Mammary epithelial cell (primary cell): ENCODE measurements at regions of chr14 and their contacts with region 1.

Region 1: DNA sequence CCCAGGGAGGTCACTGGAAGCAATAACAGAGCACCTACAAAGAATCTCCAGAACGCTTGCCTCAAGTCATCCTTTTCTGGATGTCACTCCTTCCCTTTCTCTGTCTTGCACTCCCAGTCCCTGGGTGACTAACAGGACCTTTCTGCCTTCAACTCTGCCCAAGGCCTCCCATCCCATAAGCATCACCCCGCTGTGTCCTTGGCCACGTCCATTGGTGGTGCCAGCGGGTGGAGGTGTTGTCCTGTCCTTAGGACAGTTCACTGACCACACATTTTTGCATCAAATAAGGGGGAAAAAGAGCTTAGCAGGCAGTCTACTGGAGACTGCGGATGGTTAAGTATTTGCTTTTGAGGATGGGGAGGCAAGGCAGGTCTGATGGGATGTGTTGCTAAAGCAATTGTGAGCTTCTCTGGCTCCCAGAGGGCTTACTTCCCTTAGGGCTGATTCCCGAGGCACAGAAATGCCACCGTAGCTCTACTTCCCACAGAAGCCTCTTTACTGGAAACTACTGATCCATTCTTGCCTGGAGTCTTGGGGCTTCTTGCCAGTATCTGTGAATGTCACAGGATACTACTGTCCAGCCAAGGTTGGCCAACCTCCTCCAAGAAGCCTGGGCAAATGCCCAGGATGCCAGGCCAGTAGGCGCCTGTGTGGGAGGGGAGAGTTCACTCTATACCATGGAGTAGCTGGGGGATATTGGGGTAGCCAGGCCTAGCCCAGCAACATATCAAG is 23.8 kb upstream of the PLEK2 start:
- DNase-seq: no peak
- H3K4me3 ChIP-seq: no peak overlapping the region
- H3K27ac ChIP-seq: no peak overlapping the region
- H3K4me1 ChIP-seq: peaks cover 4% of the 10 kb centered on the region
- H3K27me3 ChIP-seq: no peaks in the 10 kb centered on the region
- CTCF ChIP-seq: no peak

Region 2: DNA sequence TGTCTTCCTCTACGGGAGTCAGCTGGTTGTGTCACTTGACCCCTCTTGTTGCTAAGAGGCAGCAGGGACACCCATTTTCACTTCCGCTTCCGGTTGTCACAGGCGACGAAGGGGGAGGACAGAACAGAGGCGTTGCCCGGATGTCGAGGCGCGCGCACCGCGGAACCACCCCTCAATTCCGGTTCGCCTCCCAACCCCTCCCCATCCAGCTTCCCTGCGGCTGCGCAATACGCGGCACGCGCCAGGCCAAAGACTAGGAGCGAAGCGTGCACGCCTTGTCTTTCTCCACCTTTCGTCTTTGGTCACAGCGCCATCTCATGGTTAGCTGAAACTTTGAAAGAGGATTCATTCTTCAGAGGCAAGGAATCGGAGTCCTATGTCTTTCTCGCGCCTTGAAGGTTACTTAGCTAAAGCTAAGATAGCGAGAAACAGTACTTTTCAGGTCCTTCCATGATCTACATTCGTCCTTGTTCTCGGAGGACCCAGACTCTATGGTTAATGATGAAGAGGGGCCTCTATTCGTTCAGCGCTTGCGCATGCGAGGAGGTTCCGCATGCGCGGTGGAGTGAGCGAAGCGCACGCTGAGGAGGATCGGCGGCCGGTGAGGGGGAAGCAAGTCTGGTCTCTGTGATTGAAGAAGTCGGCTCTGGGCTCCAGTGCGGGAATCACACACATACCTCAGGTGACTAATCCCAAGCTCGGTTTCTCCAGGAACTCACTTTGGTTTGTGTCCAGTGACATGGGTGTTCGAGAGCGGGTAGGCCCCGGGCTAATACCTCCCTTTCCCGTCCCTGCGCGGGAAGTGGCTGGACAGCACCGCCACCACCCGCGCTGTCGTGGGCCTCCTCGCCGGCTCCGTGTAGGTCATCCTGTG is 75.8 kb before region 1 on chr14 and contains the starts of genes ATP6V1D and EIF2S1:
- CTCF ChIA-PET with region 1: no interaction called
- dilution Hi-C with region 1: no loop called
- in situ Hi-C with region 1: no loop called
- intact Hi-C with region 1: no loop called
- DNase-seq: peak; percentile 99
- H3K4me3 ChIP-seq: peak within 1 kb of the TSS; percentile 82 to 90 (median 88)
- H3K27ac ChIP-seq: peak within 1 kb of the TSS; percentile 97
- H3K4me1 ChIP-seq: peaks cover 27% of the 10 kb centered on the region
- H3K27me3 ChIP-seq: no peaks in the 10 kb centered on the region
- CTCF ChIP-seq: peak; percentile 97 to 99
- total RNA-seq, gene ATP6V1D: 87.1 to 124 TPM
- total RNA-seq, gene EIF2S1: 120 to 198 TPM

Region 3: GRCh38 chr14:67508956-67509355 is 73.2 kb after region 1 on chr14:
- CTCF ChIA-PET with region 1: no interaction called
- dilution Hi-C with region 1: loop called (anchors 5 kb)
- in situ Hi-C with region 1: no loop called
- intact Hi-C with region 1: no loop called
- DNase-seq: no peak
- H3K4me3 ChIP-seq: no peak overlapping the region
- H3K27ac ChIP-seq: no peak overlapping the region
- H3K4me1 ChIP-seq: peaks cover 15% of the 10 kb centered on the region
- H3K27me3 ChIP-seq: no peaks in the 10 kb centered on the region
- CTCF ChIP-seq: no peak

Region 4: DNA sequence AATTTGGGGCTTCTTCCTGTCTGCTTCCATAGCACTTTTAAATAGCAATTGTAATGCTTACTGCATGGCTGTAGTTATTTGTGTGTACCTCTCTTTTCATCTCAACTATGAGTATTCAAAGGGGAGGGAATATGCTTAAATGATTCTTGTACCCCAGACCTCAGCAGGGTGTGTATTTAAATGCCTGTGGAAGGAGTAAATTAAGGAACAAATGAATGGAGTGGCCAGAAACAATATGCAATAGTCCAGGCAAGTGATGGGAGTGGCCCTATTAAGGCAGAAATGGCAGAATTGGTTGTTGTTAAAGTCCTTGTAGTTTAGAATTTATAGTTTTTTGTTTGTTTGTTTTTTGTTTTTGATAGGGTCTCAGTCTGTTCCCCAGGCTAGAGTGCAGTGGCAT is 385.3 kb after region 1 on chr14:
- CTCF ChIA-PET with region 1: interaction called, 18 read pairs
- dilution Hi-C with region 1: no loop called
- in situ Hi-C with region 1: no loop called
- intact Hi-C with region 1: no loop called
- DNase-seq: no peak
- H3K4me3 ChIP-seq: no peak overlapping the region
- H3K27ac ChIP-seq: no peak overlapping the region
- H3K4me1 ChIP-seq: peaks cover 11% of the 10 kb centered on the region
- H3K27me3 ChIP-seq: no peaks in the 10 kb centered on the region
- CTCF ChIP-seq: no peak